ENCODE measurements at regions of chr10 and their contacts with region 1.

Region 1: DNA sequence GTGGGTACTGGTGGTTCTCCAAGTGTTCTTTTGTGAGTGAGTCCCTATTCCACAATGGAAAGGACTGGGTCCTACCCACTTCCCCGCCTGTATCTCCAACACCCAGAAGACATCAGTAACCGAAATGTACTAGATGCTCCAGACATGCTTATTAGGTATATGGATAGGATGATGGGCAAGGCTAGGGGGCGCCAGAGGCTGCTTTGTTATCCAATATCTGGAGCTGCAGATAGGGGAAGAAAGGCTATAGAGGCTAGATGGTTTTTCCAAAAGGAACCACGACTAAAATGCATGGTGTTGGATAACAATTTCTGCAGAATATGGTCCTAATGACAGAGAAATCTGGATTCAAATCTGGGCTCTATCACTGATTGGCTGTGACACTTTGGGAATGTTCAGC is 56.2 kb upstream of the TM9SF3 start:
- DNase-seq: peak; percentile 40
- ATAC-seq: no peak
- H3K4me3 ChIP-seq: no peak overlapping the region
- H3K27ac ChIP-seq: no peak overlapping the region
- H3K4me1 ChIP-seq: no peaks in the 10 kb centered on the region; the same call in 1 of the 2 replicates
- H3K27me3 ChIP-seq: no peaks in the 10 kb centered on the region
- CTCF ChIP-seq: peak; percentile 55

Region 2: DNA sequence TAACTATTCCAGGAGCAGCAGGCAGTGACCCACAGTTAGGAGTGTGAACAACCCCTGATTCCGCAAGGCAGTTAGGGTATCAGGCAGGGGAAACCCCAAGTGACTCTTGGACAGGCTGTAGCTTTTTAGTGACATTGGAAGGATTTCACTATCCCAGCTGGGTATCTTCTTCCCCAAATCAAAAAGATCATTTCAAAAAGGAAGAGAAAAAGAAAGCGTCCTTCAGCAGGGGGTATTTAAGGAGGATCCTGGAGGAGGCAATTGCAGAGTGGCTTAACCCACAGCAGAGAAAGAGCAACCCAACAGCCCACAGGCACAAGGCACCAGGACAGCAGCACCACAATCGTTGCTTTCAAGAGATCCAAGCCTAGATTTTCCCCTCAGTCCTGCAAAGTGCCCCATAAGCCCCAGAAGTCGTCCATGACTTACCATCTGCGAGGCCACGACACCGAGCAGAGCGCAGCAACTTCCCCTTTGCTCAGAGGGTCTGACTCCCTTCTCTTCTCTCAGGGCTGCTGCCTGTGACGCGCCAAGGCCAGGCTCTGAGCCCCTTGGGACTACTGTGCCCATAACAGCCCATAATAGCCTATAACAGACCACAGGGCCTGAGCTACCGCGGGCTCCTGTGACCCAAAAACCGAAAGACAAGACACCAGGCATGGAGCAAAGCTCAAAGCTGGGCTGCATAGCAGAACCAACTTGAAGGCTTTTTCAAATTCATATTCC is 57.6 kb after region 1 on chr10:
- CTCF ChIA-PET with region 1: no interaction called
- POLR2A ChIA-PET with region 1: no interaction called
- intact Hi-C with region 1: no loop called
- DNase-seq: no peak
- ATAC-seq: no peak
- H3K4me3 ChIP-seq: no peak overlapping the region
- H3K27ac ChIP-seq: no peak overlapping the region
- H3K4me1 ChIP-seq: no peaks in the 10 kb centered on the region
- H3K27me3 ChIP-seq: no peaks in the 10 kb centered on the region
- CTCF ChIP-seq: no peak

Region 3: GRCh38 chr10:96743988-96744585 is 101.1 kb after region 1 on chr10:
- CTCF ChIA-PET with region 1: interaction called, 4 read pairs
- POLR2A ChIA-PET with region 1: no interaction called
- intact Hi-C with region 1: loop called (anchors 1 kb)
- DNase-seq: no peak
- ATAC-seq: no peak
- H3K4me3 ChIP-seq: no peak overlapping the region
- H3K27ac ChIP-seq: no peak overlapping the region
- H3K4me1 ChIP-seq: peaks cover 3% of the 10 kb centered on the region; the same call in 1 of the 2 replicates
- H3K27me3 ChIP-seq: no peaks in the 10 kb centered on the region
- CTCF ChIP-seq: peak; percentile 40

Region 4: DNA sequence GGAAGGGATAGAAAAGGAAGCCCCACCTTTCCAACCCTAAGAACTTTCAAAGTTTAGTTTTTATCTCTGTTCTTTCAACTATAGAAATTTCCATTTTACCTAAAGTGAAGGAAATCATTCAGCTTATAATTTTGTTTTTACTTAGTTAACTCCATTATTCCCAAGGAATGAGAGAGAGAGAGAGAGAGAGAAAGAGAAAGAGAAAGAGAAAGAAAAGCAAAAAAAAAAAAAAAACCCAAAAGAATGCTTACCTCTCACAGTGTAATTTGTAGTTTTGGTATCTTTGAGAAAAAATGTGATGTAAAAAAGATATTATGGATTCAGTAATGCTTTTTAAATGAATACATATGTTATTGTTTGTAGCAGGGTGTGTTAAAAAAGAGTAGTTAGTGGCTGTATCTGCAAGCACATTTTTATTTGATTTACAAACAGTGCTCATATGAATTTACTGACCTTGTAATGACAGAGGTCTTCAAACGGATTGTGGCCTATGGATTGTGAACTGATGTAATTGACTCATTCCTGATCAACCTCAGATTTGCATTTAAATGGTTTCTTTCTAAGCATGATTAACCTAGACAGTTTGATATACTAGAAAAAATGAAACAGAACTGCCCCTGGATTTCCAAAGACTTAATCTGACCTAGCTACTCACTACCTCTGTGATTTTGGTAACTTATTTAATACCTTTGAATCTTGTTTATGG is 254.1 kb after region 1 on chr10:
- CTCF ChIA-PET with region 1: interaction called, 15 read pairs
- POLR2A ChIA-PET with region 1: no interaction called
- intact Hi-C with region 1: no loop called
- DNase-seq: no peak
- ATAC-seq: no peak
- H3K4me3 ChIP-seq: no peak overlapping the region
- H3K27ac ChIP-seq: no peak overlapping the region
- H3K4me1 ChIP-seq: peaks cover 2% of the 10 kb centered on the region; the same call in 1 of the 2 replicates
- H3K27me3 ChIP-seq: no peaks in the 10 kb centered on the region
- CTCF ChIP-seq: no peak

Region 5: GRCh38 chr10:97089209-97089870 is 446.4 kb after region 1 on chr10:
- CTCF ChIA-PET with region 1: no interaction called
- POLR2A ChIA-PET with region 1: no interaction called
- intact Hi-C with region 1: no loop called
- DNase-seq: peak; percentile 37
- ATAC-seq: peak; percentile 43; the same call in 1 of the 2 replicates
- H3K4me3 ChIP-seq: no peak overlapping the region
- H3K27ac ChIP-seq: no peak overlapping the region
- H3K4me1 ChIP-seq: no peaks in the 10 kb centered on the region
- H3K27me3 ChIP-seq: peaks cover 23% of the 10 kb centered on the region
- CTCF ChIP-seq: no peak